Activated CD4-positive, alpha-beta T cell treated with anti-CD3 and anti-CD28 coated beads for 36 hours (primary cell): ENCODE measurements at regions of chr13 and their contacts with region 1.

Region 1: DNA sequence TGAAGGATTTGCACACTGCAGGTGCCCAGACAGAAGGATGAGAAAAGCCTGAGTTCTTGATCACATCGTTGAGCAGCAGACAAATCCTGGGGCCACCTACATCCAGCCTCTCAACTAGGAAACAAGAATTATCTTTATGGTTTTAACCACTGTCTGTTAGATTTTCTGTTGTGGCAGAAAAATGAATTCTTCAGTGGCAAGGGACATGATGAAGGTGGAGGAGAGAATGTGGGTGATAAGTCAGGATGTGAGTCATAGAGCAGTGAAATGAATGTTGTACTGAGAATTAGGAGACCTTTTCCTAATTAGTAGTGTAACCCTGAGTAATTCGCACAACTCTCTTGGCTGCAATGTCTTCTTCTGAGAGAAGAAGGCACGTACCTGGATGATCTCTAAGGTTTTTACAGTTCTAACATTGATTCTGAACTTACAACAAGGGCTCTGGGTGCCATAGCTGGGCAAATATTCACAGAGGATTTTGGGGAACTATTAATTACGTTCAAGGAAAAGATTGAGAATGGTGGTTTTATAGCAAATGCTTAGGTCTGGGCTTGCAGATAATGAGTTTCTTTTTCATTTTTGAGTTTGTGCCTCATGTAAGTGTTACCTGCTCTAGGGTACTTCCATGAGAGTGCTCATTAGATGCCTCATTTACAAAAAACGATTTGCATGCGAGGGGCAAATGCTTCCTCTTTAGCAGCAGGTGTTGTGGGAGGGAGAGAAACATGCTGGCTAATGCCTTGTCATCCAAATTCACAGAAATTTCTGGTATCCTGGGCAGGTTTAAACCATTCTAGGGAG is 111.0 kb upstream of the KL start:
- DNase-seq: peak; percentile 39
- ATAC-seq: peak; percentile 95
- H3K4me3 Mint-ChIP-seq: peak overlapping the region; percentile 15
- H3K27ac Mint-ChIP-seq: peak overlapping the region; percentile 90
- H3K4me1 Mint-ChIP-seq: peaks cover 17% of the 10 kb centered on the region
- H3K27me3 Mint-ChIP-seq: peaks cover 4% of the 10 kb centered on the region

Region 2: GRCh38 chr13:32737111-32737571 is 168.1 kb before region 1 on chr13:
- CTCF ChIA-PET with region 1: no interaction called
- POLR2A ChIA-PET with region 1: no interaction called
- intact Hi-C with region 1: loop called in 1 of 2 experiments (anchors 2 kb)
- DNase-seq: no peak
- ATAC-seq: peak; percentile 73
- H3K4me3 Mint-ChIP-seq: peak overlapping the region; percentile 69
- H3K27ac Mint-ChIP-seq: peak overlapping the region; percentile 92
- H3K4me1 Mint-ChIP-seq: peaks cover 27% of the 10 kb centered on the region
- H3K27me3 Mint-ChIP-seq: no peaks in the 10 kb centered on the region

Region 3: GRCh38 chr13:32783067-32783466 is 122.2 kb before region 1 on chr13:
- CTCF ChIA-PET with region 1: no interaction called
- POLR2A ChIA-PET with region 1: no interaction called
- intact Hi-C with region 1: loop called in 1 of 2 experiments (anchors 5 kb)
- DNase-seq: peak; percentile 36
- ATAC-seq: peak; percentile 97
- H3K4me3 Mint-ChIP-seq: no peak overlapping the region
- H3K27ac Mint-ChIP-seq: no peak overlapping the region
- H3K4me1 Mint-ChIP-seq: peaks cover 17% of the 10 kb centered on the region
- H3K27me3 Mint-ChIP-seq: no peaks in the 10 kb centered on the region

Region 4: DNA sequence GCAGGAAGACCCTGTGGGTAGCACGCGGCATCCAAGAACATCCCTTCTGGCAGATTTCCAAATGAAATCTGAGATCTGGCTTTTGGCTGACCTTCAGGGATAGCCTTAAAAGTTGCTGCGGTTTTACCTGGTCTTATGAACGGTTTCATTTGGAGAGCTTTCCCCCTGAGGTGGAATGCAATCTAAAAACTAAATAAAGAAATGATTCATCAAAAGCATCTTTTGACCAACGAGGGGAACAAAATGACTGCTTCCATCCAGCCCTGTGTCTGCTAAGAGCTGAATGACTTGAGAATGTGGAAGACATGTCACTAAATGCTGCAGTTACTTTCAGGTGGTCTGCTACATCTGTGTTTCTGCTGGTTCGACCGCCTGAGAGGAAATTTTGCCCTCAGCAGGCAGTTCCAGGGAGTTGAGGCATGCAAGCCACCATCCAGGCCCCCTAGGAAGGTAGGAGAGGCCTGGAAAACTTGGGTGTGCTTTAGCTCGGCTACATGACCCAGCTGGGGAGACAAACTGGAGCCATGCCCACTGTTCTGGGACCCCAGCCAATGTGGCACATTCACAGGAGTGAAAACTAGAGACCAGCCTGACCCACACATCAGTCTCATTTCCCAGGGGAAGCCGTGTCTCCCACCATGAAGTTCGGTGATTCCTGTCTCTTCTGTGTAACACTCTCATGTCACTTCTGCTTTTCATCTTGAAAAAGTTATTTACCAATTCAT is 64.1 kb before region 1 on chr13:
- CTCF ChIA-PET with region 1: no interaction called
- POLR2A ChIA-PET with region 1: no interaction called
- intact Hi-C with region 1: loop called in 1 of 2 experiments (anchors 2 kb)
- DNase-seq: no peak
- ATAC-seq: peak; percentile 71
- H3K4me3 Mint-ChIP-seq: no peak overlapping the region
- H3K27ac Mint-ChIP-seq: no peak overlapping the region
- H3K4me1 Mint-ChIP-seq: peaks cover 4% of the 10 kb centered on the region
- H3K27me3 Mint-ChIP-seq: no peaks in the 10 kb centered on the region

Region 5: GRCh38 chr13:32917504-32917903 is 12.2 kb after region 1 on chr13:
- CTCF ChIA-PET with region 1: no interaction called
- POLR2A ChIA-PET with region 1: no interaction called
- intact Hi-C with region 1: loop called in 1 of 2 experiments (anchors 1 kb)
- DNase-seq: peak; percentile 30
- ATAC-seq: peak; percentile 97
- H3K4me3 Mint-ChIP-seq: no peak overlapping the region
- H3K27ac Mint-ChIP-seq: peak overlapping the region; percentile 67
- H3K4me1 Mint-ChIP-seq: peaks cover 18% of the 10 kb centered on the region
- H3K27me3 Mint-ChIP-seq: peaks cover 7% of the 10 kb centered on the region

Region 6: GRCh38 chr13:32984846-32985544 is 79.7 kb after region 1 on chr13:
- CTCF ChIA-PET with region 1: no interaction called
- POLR2A ChIA-PET with region 1: no interaction called
- intact Hi-C with region 1: no loop called
- DNase-seq: peak; percentile 13
- ATAC-seq: peak; percentile 57
- H3K4me3 Mint-ChIP-seq: no peak overlapping the region
- H3K27ac Mint-ChIP-seq: no peak overlapping the region
- H3K4me1 Mint-ChIP-seq: peaks cover 3% of the 10 kb centered on the region
- H3K27me3 Mint-ChIP-seq: peaks cover 7% of the 10 kb centered on the region